ENCODE measurements at regions of chr12 and their contacts with region 1.

Region 1: DNA sequence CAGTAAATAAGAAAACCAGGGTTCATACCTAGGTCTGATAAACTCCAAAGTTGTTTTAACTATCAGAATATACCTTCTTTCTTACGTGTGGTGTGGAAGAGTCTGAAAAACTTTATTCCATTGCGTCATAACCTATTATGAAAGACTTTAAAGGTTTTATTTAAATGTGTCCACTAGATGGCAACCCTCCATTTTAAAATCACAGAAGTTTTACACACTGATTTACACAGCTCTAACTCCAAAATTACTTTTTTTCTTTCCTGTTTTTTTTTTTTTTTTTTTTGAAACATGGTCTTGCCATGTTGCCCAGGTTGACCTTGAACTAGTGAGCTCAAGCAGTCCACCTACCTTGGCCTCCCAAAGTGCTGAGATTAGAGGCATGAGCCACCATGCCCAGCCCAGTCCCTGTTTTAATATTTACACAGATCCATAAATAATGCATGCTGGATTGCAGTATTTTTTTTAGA is 17.3 kb upstream of the TMPRSS12 start:
- DNase-seq: peak; percentile 50
- H3K27ac ChIP-seq: no peak overlapping the region
- CTCF ChIP-seq: peak; percentile 42

Region 2: GRCh38 chr12:50283229-50283923 is 542.0 kb before region 1 on chr12 and contains the start of gene LIMA1:
- CTCF ChIA-PET with region 1: no interaction called
- POLR2A ChIA-PET with region 1: no interaction called
- DNase-seq: peak; percentile 94
- H3K27ac ChIP-seq: peak within 1 kb of the TSS; percentile 70
- CTCF ChIP-seq: peak; percentile 15; the same call in 1 of the 2 replicates

Region 3: DNA sequence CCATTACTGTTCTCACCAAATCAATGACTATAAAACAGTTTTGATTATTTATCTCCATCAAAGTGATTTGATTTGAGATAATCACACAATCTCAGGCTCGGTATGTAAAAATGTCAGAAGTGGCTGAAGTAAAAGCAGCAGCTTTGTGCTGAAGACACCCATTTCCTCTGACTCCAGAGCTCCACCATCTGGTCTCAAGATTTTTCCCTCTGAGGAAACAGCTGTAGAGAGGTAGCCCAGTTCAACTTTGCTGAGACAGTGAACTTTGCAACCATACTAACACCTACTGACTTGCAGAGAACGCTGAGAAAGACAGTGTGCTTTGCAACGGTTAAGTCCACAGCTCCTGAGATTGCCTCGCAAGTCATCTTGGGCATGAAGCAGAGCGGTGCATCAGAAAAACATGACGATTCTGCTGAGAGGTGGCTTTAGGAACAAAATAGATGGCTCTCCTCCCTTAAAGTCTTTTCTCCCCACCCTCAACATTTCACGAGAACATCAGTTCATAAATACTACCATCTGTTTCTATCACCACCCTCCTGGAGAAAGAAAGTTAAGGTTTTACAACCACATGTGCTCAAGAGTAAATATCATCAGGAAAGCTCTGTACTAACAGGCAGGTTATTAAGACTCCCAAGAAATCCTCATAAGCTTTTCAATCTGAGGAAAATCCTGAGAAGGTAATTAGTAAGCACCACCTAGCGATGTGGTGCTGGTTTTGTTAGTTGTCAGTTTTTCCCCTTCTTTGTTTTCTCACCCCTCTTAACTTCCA is 161.7 kb after region 1 on chr12:
- CTCF ChIA-PET with region 1: interaction called, 17 read pairs
- POLR2A ChIA-PET with region 1: interaction called, 4 read pairs
- DNase-seq: peak; percentile 18
- H3K27ac ChIP-seq: no peak overlapping the region
- CTCF ChIP-seq: peak; percentile 68